ENCODE measurements at regions of chr10 and their contacts with region 1.

Region 1: DNA sequence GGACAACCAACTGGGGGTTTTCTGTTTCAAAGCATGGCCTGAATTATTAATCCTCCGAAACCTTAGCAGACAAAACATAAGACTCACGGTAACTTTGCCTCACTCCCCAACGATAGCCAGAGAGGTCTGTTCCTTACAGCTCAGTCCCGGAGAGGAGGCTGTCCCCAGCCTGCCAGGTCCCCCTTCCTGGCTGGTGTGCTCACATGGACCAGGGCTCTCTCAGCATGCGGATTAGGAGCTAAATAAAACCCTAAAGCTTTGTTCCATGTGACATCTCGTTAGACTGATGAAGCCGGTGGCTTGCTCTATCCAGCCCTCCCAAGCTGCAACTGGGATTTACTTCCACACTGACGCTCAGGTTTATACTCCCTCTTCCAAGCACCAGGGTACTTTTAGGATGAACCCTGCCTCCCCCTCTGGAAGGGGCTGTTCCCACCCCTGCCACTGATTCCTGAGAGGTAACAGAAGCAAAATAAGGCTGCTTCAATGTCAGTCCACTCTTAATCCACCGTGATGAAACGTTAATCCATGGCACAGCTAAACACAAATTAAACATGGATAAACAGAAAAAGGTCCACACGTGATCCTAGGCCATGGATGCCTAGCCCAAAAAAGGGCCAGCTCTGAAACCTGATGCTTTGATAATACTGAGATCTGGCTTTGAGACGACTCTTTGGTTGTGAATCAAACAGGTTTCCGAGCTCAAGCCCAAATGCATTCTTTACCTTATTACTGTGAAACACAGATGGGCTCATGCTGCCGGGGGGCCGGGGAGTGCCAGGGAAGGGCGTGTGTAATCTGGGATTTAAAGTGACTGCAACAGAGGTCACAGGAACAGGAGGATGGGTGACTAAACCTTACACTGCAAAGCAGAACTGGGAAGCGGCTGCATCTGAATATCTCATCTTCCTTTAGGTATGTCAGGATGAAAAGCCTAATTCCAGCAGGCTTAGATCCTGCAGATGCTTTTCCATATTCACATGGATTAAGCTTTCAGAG is 86.2 kb downstream of the ZRANB1 start:
- DNase-seq: no peak
- H3K4me3 ChIP-seq: no peak overlapping the region
- H3K27ac ChIP-seq: no peak overlapping the region
- H3K4me1 ChIP-seq: peaks cover 4% of the 10 kb centered on the region
- H3K27me3 ChIP-seq: no peaks in the 10 kb centered on the region
- CTCF ChIP-seq: no peak

Region 2: DNA sequence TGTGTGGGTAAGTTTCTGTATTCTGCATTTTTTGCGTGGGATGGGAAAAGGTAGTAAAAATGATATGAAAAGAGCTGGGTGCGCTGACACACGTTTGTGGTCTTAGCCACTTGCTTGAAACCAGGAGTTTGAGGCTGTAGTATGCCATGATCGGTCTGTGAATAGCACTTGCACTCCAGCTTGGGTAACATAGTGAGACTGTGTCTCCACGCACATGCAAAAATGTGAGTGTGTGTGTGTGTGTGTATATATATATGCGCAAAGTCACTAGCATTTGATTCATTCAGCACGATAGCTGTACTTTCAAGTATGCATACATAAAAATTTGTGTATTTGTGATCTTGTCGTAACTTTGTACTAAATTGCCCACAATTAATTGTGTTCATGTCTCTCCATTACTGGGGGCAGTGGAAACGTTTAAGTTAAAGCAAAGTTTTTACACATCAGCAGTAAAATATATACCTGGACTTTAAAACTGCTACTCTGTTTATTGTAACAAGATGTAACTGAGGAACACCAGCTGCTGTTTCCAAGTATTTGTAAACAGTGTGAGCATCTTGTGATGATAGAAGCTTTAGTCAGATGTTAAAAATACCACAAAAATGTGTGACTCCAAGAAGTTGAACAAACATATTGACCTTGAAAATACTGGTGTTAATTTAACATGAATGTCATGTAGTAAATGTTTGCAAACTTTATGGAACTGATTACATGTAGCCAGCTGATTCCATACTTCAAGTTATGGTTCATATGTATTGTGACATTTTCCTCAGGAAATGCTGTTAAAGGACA is 84.7 kb before region 1 on chr10:
- CTCF ChIA-PET with region 1: no interaction called
- dilution Hi-C with region 1: loop called (anchors 5 kb)
- in situ Hi-C with region 1: no loop called
- intact Hi-C with region 1: no loop called
- DNase-seq: peak; percentile 60
- H3K4me3 ChIP-seq: no peak overlapping the region
- H3K27ac ChIP-seq: peak overlapping the region; percentile 30
- H3K4me1 ChIP-seq: peaks cover 7% of the 10 kb centered on the region
- H3K27me3 ChIP-seq: no peaks in the 10 kb centered on the region
- CTCF ChIP-seq: no peak

Region 3: DNA sequence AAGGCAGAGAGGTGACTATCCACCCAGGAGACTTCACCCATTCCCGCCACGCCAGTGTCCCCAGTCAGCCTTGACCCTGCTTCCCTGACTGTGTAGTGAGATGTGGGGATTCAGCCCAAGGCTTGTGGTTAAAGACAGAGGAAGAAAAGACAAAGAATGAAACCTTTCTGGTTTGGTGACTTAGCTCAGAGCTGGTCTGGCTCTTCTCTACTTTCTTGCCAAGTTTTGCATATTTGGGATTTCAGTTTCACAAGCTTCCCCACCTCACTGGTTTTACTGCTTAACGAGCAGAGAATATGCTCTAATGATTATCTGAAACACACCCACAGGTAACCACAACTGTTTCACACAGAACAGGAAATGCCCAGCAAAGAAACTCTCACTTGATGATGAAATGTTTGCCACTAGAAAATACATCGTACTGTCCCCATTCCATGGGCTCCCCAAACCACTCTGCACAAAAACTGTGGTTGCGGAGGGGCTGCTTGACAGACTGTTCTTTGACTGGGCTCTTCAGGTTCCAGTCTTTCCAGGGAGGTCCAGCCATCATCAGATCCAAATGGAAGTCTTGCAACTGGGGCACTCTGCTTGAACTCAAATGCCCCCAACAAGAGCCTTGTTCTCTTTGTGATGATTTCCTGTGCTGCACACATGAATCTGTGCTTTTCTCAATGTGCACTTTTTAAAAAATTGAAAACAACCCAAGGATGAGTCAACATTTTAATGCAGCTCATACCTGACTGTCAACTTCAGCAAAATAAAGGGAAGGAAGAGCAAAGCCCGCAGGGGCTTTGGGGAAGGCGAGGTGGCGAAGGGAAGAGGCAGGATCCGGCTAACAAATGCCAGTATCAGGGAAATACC is 36.7 kb after region 1 on chr10:
- CTCF ChIA-PET with region 1: no interaction called
- dilution Hi-C with region 1: no loop called
- in situ Hi-C with region 1: no loop called
- intact Hi-C with region 1: no loop called
- DNase-seq: peak; percentile 98
- H3K4me3 ChIP-seq: peak overlapping the region; percentile 5 to 17 (median 7)
- H3K27ac ChIP-seq: peak overlapping the region; percentile 89
- H3K4me1 ChIP-seq: peaks cover 64% of the 10 kb centered on the region
- H3K27me3 ChIP-seq: no peaks in the 10 kb centered on the region
- CTCF ChIP-seq: no peak

Region 4: GRCh38 chr10:125076891-125077541 is 48.8 kb after region 1 on chr10:
- CTCF ChIA-PET with region 1: no interaction called
- dilution Hi-C with region 1: loop called (anchors 5 kb)
- in situ Hi-C with region 1: no loop called
- intact Hi-C with region 1: no loop called
- DNase-seq: no peak
- H3K4me3 ChIP-seq: no peak overlapping the region
- H3K27ac ChIP-seq: no peak overlapping the region
- H3K4me1 ChIP-seq: no peaks in the 10 kb centered on the region
- H3K27me3 ChIP-seq: no peaks in the 10 kb centered on the region
- CTCF ChIP-seq: no peak